WTC11 (cell line): ENCODE measurements at regions of chr1 and their contacts with region 1.

Region 1: DNA sequence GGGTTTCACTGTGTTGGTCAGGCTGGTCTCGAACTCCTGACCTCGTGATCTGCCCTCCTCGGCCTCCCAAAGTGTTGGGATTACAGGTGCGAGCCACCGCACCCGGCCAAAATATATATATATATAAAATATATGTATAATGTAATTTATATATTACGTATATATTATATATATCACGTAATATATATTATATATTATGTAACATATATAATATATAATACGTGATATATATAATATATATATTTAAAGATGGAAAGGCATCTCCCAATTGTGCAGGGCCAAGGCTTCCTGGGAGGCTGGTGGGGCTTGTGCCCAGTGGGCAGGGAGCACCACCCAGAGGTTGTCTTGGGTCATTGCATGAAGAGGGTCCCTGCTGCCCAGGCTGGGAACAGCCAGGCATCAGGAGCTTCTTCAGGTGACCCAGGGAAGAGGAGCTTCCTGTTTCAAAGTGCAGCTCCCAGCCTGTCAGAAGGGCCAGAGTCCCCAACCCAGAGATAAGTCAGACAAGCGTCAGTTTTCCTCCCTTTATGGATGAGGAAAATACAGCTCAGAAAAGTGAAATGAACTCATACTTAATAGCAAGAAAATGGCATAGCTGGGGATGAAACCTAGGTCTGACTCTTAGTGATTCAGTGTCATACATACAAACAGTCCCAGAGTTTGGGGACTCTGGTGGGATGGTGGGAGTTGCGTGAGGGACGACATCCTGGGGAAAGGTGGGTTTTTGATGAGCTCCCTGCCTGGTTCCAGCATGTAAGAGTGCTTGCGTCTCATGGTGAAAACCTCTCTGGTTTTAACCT is 12.0 kb downstream of the UBE2Q1 start:
- DNase-seq: peak; percentile 82
- ATAC-seq: peak; percentile 97
- H3K4me3 Mint-ChIP-seq: no peak overlapping the region
- H3K27ac Mint-ChIP-seq: 0 out of 2 replicates have a peak overlapping the region, but pooled peaks have one; percentile 36
- H3K4me1 Mint-ChIP-seq: no peaks in the 10 kb centered on the region; the same call in 1 of the 2 replicates
- H3K27me3 Mint-ChIP-seq: no peaks in the 10 kb centered on the region
- CTCF ChIP-seq: peak; percentile 84

Region 2: DNA sequence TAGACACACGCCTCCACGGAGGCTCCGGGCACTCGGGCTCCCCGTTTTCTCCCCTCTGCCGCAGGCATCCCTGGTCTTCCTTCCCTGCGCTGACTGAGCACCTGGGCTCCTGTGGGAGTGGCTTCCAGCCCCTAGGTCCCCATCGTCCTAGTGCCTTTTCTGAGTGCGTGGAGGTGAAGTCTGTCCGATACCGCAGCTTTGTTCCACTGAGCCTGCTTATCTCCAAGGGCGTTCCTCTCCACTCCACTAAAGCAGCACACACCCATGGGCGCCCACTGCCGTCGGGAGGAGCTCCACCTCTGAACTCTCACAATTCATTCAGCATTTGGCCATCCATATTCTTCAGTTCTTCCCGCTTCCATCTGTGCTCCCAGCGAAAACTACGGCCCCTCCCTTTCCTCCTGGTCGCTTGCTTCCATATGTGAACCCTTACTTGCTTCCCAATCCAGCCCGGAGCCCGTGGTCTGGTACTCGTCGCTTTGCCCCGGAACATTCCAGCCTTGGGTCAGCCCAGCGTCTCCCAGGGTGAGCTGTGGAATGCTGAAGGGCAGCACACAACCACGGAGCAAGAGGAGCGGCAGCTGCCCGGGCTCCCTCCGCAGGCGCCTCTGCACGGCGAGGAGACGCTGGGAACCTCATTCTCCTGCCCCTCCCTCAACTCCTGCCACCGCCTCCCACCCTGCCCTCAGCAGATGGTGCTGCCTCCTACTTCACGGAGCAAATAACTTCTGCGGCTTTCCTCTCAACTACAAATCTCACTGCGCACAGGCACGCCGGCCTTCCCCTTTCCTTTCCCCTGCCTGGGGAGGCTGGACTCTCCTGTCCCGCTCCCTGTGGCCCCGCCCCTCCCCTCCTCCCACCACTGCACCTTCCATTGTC is 193.6 kb before region 1 on chr1:
- CTCF ChIA-PET with region 1: interaction called, 10 read pairs
- POLR2A ChIA-PET with region 1: no interaction called
- DNase-seq: peak; percentile 73
- ATAC-seq: peak; percentile 69
- H3K4me3 Mint-ChIP-seq: peak overlapping the region; percentile 87
- H3K27ac Mint-ChIP-seq: no peak overlapping the region; the same call in none of the 2 replicates
- H3K4me1 Mint-ChIP-seq: peaks cover 13% of the 10 kb centered on the region
- H3K27me3 Mint-ChIP-seq: peaks cover 22% of the 10 kb centered on the region
- CTCF ChIP-seq: no peak

Region 3: GRCh38 chr1:154466921-154467417 is 79.5 kb before region 1 on chr1:
- CTCF ChIA-PET with region 1: interaction called, 15 read pairs
- POLR2A ChIA-PET with region 1: no interaction called
- DNase-seq: no peak
- ATAC-seq: peak; percentile 59
- H3K4me3 Mint-ChIP-seq: no peak overlapping the region
- H3K27ac Mint-ChIP-seq: no peak overlapping the region
- H3K4me1 Mint-ChIP-seq: peaks cover 16% of the 10 kb centered on the region
- H3K27me3 Mint-ChIP-seq: no peaks in the 10 kb centered on the region
- CTCF ChIP-seq: no peak

Region 4: GRCh38 chr1:154493276-154493675 is 53.2 kb before region 1 on chr1:
- CTCF ChIA-PET with region 1: interaction called, 33 read pairs
- POLR2A ChIA-PET with region 1: no interaction called
- DNase-seq: peak; percentile 26
- ATAC-seq: peak; percentile 88
- H3K4me3 Mint-ChIP-seq: no peak overlapping the region
- H3K27ac Mint-ChIP-seq: peak overlapping the region; percentile 74; the same call in 1 of the 2 replicates
- H3K4me1 Mint-ChIP-seq: peaks cover 26% of the 10 kb centered on the region
- H3K27me3 Mint-ChIP-seq: peaks cover 4% of the 10 kb centered on the region
- CTCF ChIP-seq: no peak

Region 5: GRCh38 chr1:154524881-154525280 is 21.6 kb before region 1 on chr1:
- CTCF ChIA-PET with region 1: interaction called, 10 read pairs
- POLR2A ChIA-PET with region 1: no interaction called
- DNase-seq: no peak
- ATAC-seq: no peak
- H3K4me3 Mint-ChIP-seq: no peak overlapping the region
- H3K27ac Mint-ChIP-seq: no peak overlapping the region
- H3K4me1 Mint-ChIP-seq: no peaks in the 10 kb centered on the region
- H3K27me3 Mint-ChIP-seq: no peaks in the 10 kb centered on the region
- CTCF ChIP-seq: no peak

Region 6: GRCh38 chr1:154558575-154559465 is 12.4 kb after region 1 on chr1 and contains the start of gene UBE2Q1:
- CTCF ChIA-PET with region 1: interaction called, 14 read pairs
- POLR2A ChIA-PET with region 1: no interaction called
- DNase-seq: peak; percentile 95
- ATAC-seq: peak; percentile 70
- H3K4me3 Mint-ChIP-seq: peak within 1 kb of the TSS; percentile 94
- H3K27ac Mint-ChIP-seq: peak within 1 kb of the TSS; percentile 89
- H3K4me1 Mint-ChIP-seq: peaks cover 28% of the 10 kb centered on the region
- H3K27me3 Mint-ChIP-seq: no peaks in the 10 kb centered on the region
- CTCF ChIP-seq: no peak
- total RNA-seq, gene UBE2Q1: 60.8 to 62.7 TPM (median 61.6 TPM) in 3 replicates

Region 7: GRCh38 chr1:154936555-154937084 is 390.2 kb after region 1 on chr1 and contains the start of gene PMVK:
- CTCF ChIA-PET with region 1: interaction called, 10 read pairs
- POLR2A ChIA-PET with region 1: no interaction called
- DNase-seq: peak; percentile 93
- ATAC-seq: peak; percentile 87
- H3K4me3 Mint-ChIP-seq: peak within 1 kb of the TSS; percentile 92
- H3K27ac Mint-ChIP-seq: peak within 1 kb of the TSS; percentile 99
- H3K4me1 Mint-ChIP-seq: peaks cover 26% of the 10 kb centered on the region
- H3K27me3 Mint-ChIP-seq: peaks cover 3% of the 10 kb centered on the region; the same call in 1 of the 2 replicates
- CTCF ChIP-seq: no peak
- total RNA-seq, gene PMVK: 26.8 to 38.7 TPM (median 36.8 TPM) in 3 replicates